ENCODE measurements at regions of chr20 and their contacts with region 1.

Region 1: GRCh38 chr20:48904365-48905296 is 16.9 kb upstream of the ARFGEF2 start:
- DNase-seq: peak; percentile 72
- CTCF ChIP-seq: peak; percentile 66

Region 2: DNA sequence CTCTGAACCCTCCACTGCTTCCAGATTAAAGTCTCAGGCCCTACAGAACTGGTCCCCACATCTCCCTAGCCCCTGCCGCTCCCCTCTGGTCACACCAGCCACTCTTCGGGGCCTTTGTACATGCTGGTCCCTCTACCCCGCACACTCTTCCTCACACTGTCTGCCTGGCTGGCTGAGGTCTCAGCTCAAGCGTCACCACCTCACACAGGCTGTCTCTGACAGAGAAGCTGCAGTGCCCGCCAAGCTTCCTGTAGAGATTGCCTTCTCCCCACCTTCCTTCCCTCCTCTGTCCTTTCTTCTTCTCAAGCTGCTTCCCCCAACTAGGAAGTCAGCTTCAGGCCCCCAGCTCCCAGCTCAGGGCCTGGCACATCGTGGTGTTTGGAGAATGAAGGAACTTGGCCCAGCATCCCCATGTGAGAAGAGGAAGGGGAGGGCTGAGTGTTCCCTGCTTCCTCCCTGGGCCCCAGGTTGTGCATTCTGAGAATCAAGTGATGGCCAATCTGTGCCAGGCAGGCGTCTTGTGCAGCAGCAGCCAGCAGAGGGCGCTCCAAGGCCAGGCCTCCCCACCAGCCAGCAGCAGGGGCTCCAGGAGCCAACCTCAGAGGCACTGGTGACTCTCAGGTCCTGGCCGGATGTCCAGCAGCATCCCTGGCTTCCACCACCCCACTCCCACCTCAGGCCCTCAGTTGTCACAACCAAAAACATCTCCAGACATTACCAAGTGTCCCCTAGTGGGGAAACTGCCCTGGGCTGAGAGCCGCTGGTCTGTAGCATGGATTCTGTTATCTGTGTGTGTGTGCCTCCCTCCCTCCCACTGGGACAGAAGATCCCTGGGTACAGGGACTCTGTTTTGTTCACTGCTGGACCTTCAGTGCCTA is 269.0 kb before region 1 on chr20:
- CTCF ChIA-PET with region 1: interaction called, 21 read pairs
- POLR2A ChIA-PET with region 1: no interaction called
- DNase-seq: peak; percentile 85
- CTCF ChIP-seq: peak; percentile 87

Region 3: DNA sequence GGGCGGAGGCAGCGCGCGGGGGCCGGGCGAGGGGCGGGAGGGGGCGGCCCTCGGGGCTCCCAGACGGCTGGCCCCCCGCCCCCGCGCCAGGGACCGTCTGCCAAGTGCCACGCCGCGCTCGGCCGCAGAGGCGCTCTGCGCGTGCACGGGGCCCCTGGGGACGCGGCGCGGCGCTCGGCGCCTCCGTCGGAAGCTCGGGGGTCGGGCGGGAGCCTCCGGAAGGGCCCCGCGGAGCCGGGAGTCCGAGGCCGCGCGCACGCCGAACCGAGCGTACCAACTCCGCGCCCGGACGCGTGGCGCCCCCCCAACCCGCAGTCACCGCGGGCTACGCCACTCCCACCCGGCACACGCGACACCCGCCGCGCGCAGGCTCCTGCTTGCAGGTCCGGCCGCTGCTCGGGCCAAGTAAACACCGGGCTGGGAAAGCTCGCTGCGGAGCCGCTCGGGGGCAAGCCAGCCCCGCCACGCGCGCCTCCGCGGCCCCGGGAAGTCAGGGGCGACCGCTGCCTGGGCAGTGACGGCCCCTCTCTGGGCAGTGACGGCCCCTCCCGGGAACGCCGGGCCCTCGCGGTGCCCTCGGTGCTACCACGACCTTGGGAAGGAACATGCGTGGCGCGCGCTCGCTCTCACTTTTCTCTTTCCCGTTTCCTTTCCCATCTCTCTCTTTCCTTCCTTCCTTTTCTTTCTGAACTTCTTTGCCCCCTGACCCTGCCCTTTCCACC is 76.4 kb before region 1 on chr20:
- CTCF ChIA-PET with region 1: interaction called, 11 read pairs
- POLR2A ChIA-PET with region 1: no interaction called
- DNase-seq: peak; percentile 94
- CTCF ChIP-seq: no peak

Region 4: DNA sequence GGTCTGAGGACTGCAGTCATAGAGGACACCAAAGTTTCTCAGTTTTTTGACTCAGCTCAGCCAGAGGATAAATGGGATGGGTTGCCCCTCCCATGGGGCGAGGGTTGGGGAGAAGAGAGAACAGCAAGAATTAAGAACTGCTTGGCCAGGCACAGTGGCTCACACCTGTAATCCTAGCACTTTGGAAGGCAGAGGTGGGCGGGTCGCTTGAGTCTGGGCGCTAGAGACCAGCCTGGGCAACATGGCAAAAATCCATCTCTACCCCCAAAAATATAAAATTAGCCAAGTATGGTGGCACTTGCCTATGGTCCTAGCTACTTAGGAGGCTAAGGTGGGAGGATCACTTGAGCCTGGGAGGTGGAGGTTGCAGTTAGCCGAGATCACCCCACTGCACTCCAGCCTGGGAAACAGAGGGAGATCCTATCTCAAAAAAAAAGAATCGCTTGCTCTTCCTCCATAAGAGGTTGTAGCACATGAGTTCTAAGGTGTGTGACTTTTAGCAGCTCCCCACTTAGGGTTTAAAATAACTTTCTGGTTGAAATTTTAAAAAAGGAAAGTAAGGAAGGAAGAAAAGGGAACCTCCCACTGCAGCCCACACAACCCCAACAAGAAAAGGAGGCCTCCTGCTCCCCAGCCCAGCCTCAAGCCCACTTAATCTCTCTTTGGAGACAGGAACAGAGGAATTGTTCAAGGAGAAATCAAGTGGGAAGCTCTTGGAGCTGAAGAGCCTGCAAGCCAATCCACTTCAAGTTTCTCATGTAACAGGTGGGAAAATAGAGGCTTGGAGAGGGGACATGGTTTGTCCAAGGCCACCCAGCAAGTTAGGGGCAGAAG is 37.9 kb before region 1 on chr20:
- CTCF ChIA-PET with region 1: interaction called, 12 read pairs
- POLR2A ChIA-PET with region 1: no interaction called
- DNase-seq: no peak
- CTCF ChIP-seq: no peak

Region 5: DNA sequence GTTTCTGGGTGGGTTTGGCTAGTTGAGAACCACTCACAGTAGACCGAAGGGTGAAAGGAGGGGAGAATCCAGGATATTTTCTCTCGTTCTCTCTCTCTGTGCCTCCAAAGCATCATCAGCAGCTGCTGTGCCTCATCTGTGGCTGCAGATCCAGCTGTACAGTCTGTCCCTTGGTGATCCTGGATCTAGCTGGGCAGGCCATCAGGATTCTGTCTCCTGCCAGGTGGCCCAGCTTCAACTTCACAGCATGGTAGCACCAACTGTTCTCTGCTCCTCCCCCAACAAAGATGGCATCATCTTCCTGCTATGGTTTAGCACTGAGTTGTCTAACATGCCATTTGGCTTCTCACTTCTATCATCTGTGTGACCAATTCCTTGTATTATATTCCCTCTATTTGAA is 11.8 kb before region 1 on chr20:
- CTCF ChIA-PET with region 1: interaction called, 21 read pairs
- POLR2A ChIA-PET with region 1: no interaction called
- DNase-seq: no peak
- CTCF ChIP-seq: no peak

Measured in GM10248 (cell line).